IMR-90 (cell line): ENCODE measurements at regions of chr7 and their contacts with region 1.

Region 1: DNA sequence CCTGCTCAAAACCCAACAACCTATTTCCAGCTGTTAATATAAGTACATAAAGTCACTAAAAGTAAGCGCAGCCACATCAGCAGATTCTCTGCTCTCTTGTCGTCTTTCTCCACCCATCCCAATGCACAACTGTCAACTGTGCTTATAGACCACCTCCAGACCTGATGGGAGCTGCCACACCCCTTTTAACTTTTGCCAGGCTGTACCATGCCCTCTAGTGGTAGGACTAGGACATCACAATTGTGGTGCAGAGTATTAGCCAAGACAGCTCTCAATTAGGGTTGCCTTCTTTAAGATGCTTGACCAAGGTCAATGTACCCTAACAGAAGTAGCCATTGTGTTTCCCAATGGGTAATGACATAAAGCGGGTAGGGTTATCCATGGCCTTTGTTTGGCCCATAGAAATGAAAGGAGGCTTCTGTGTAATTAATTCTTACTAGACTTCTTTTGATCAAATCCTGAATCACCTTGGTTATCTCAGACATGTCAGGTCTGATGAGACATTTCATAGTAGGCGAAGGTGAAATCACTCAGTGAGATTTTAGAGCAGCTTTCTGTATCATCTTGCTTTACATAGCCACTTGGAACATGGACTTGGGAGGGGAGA is 68.1 kb downstream of the SCRN1 start:
- DNase-seq: peak; percentile 57
- ATAC-seq: peak; percentile 96
- H3K4me3 ChIP-seq: no peak overlapping the region
- H3K27ac ChIP-seq: no peak overlapping the region
- H3K4me1 ChIP-seq: no peaks in the 10 kb centered on the region
- H3K27me3 ChIP-seq: no peaks in the 10 kb centered on the region
- CTCF ChIP-seq: peak; percentile 82
- POLR2A ChIP-seq: no peak
- RAD21 ChIP-seq: peak; percentile 71

Region 2: DNA sequence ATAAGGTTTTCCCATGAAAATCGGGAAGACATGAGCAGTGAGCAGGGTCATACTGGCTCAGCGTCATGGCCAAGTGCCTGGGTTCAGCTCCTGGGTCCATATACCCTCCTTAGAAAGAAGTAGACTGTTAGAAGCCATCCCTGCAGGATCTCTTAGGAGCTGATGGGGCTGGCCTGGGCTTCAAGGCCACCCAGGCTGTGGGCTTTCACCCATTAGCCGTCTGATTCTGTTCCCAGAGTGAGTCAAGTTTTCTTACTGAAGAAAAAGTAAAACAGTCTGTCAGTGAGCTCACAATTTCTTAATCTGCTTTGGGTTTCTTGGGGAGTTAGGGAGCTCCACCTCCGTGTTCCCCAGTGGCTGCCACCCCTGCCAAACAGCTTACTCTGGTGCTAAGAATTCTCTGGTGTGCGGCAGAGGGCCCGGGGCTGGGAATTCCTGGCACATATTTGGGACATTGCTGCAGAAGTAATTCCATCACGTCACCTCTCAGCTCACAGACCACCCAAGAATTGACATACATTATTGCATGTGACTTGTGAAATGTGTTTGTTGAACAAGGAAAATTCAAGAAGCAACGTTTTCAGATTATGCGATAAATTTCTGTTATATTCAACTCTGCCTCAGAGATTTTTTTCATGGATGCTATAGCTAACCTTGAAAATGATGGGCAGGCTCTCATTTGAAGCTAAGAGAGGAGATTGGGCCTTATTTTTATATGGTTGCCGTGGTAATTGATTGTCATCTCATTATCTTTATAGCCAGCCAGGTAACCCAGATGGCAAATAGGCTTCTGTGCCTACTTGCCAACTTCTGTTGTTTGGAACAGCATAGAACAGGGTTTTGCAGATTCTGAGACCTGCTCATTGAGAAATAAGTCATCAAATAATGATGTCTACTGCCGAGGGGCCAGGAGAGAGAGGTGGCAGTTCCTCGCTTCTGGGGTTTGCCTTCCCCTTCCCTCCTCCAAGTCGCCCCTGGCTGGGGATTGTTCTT is 560.6 kb before region 1 on chr7:
- CTCF ChIA-PET with region 1: no interaction called
- POLR2A ChIA-PET with region 1: no interaction called
- dilution Hi-C with region 1: no loop called
- in situ Hi-C with region 1: no loop called
- intact Hi-C with region 1: no loop called
- DNase-seq: no peak
- ATAC-seq: no peak
- H3K4me3 ChIP-seq: no peak overlapping the region
- H3K27ac ChIP-seq: no peak overlapping the region
- H3K4me1 ChIP-seq: no peaks in the 10 kb centered on the region
- H3K27me3 ChIP-seq: no peaks in the 10 kb centered on the region
- CTCF ChIP-seq: no peak
- POLR2A ChIP-seq: no peak
- RAD21 ChIP-seq: no peak

Region 3: DNA sequence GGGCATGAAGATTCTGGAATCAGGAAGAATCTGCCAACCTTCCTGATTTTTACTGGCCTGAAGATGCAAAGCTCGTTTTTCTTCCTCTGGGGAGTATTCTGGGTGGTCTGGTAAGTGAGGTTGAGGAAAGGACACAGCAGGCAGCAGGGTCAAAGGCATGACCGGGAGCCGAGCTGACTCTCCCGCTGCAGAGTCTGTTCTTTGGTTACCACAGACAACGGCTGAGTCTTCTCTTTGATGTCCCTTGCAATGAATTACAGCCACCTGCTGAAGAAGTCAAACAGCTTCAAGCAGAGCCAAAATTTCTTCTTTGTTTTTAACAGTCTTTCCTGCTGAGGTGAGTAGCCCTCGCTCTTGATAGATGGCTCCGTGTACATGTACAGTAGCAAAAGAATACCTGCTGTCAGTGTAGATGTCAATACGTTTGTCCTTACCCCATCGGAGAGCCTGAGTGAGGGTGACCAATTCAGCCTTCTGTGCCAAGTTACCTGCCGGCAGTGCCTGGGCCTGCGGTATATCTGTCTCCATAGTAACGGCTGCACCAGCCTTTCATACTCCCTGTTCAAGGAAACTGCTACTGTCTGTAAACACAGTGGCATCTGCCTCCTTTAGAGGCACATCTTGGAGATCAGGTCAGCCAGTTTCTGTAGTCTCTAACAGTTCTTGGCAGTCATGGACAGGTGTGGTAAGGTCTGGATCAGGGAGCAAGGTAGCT is 281.5 kb before region 1 on chr7:
- CTCF ChIA-PET with region 1: no interaction called
- POLR2A ChIA-PET with region 1: no interaction called
- dilution Hi-C with region 1: no loop called
- in situ Hi-C with region 1: no loop called
- intact Hi-C with region 1: loop called (anchors 5 kb)
- DNase-seq: no peak
- ATAC-seq: no peak
- H3K4me3 ChIP-seq: no peak overlapping the region
- H3K27ac ChIP-seq: no peak overlapping the region
- H3K4me1 ChIP-seq: no peaks in the 10 kb centered on the region
- H3K27me3 ChIP-seq: no peaks in the 10 kb centered on the region
- CTCF ChIP-seq: no peak
- POLR2A ChIP-seq: no peak
- RAD21 ChIP-seq: no peak

Region 4: DNA sequence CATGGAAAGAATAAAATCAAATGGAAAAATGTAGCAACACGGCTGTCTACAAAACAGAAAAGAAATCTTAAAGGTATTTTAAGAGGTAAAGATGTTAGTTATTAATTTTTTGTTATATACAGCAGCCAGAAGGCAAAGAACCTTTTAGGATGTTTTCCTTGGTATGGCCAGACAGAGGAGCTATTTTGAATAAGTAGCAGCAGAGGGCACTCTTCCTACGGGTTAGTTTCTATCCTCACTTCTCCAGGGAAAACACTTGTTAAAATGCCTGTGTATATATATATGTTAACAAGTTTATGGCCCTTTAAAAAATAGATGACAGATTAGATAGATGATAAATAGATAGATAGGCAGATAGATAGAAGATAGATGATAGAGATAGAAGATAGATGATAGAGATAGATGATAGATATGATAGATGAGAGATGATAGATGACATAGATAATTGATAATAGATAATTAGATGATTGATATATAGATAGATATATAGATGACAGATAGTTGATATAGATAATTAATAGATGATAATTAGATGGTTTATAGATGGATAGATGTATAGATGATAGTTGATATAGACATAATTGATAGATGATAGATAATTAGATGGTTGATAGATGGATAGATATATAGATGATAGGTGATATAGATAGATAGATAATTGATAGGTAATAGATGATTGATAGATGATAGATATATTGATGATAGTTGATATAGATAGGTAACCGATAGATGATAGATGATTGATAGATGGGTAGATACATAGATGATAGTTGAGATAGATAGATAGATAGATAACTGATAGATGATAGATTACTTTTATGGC is 173.0 kb before region 1 on chr7:
- CTCF ChIA-PET with region 1: interaction called, 4 read pairs
- POLR2A ChIA-PET with region 1: no interaction called
- dilution Hi-C with region 1: no loop called
- in situ Hi-C with region 1: no loop called
- intact Hi-C with region 1: loop called (anchors 2 kb)
- DNase-seq: peak; percentile 45
- ATAC-seq: peak; percentile 95
- H3K4me3 ChIP-seq: no peak overlapping the region
- H3K27ac ChIP-seq: no peak overlapping the region
- H3K4me1 ChIP-seq: no peaks in the 10 kb centered on the region
- H3K27me3 ChIP-seq: peaks cover 2% of the 10 kb centered on the region; the same call in 1 of the 2 replicates
- CTCF ChIP-seq: peak; percentile 53
- POLR2A ChIP-seq: no peak
- RAD21 ChIP-seq: peak; percentile 51

Region 5: GRCh38 chr7:29878081-29878688 is 43.3 kb before region 1 on chr7:
- CTCF ChIA-PET with region 1: interaction called, 5 read pairs
- POLR2A ChIA-PET with region 1: no interaction called
- dilution Hi-C with region 1: no loop called
- in situ Hi-C with region 1: no loop called
- intact Hi-C with region 1: loop called (anchors 1 kb)
- DNase-seq: peak; percentile 46
- ATAC-seq: peak; percentile 65; the same call in 1 of the 2 replicates
- H3K4me3 ChIP-seq: no peak overlapping the region
- H3K27ac ChIP-seq: no peak overlapping the region
- H3K4me1 ChIP-seq: no peaks in the 10 kb centered on the region
- H3K27me3 ChIP-seq: peaks cover 11% of the 10 kb centered on the region
- CTCF ChIP-seq: peak; percentile 69
- POLR2A ChIP-seq: no peak
- RAD21 ChIP-seq: peak; percentile 66

Region 6: DNA sequence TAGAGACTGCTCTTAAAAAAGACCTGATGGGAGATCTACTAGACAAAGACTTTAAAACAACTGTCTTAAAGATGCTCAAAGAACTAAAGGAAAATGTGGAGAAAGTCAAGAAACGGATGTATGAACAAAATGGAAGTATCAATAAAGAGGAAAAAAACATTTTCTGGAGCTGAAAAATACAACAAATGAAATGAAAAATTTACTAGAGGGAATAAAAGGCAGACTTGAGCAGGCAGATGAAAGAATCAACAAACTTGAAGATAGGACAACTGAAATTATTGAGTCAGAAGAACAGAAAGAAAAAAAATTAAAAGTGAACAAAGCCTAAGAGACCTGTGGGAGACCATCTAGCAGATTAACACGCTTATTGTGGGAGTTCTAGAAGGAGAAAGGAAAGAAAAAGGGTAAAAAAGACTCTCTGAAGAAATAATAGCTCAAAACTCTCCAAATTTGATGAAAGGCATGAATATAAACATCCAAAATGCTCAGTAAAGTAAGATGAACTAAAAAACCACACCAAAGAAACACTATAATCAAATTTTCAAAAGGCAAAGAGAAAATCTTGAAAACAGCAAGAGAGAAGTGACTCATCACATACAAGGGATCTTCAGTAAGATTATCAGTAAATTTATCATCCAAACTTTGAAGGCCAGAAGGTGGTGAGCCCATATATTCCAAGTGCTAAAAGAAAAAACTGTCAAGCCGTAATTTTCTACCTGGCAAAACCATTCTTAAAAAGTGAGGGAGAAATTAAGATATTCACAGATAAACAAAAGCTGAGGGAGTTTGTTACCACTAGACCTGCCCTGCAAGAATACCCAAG is 15.1 kb before region 1 on chr7:
- CTCF ChIA-PET with region 1: interaction called, 10 read pairs
- POLR2A ChIA-PET with region 1: no interaction called
- dilution Hi-C with region 1: no loop called
- in situ Hi-C with region 1: no loop called
- intact Hi-C with region 1: no loop called
- DNase-seq: no peak
- ATAC-seq: no peak
- H3K4me3 ChIP-seq: no peak overlapping the region
- H3K27ac ChIP-seq: no peak overlapping the region
- H3K4me1 ChIP-seq: no peaks in the 10 kb centered on the region
- H3K27me3 ChIP-seq: no peaks in the 10 kb centered on the region
- CTCF ChIP-seq: no peak
- POLR2A ChIP-seq: no peak
- RAD21 ChIP-seq: no peak

Region 7: GRCh38 chr7:30369879-30370278 is 448.4 kb after region 1 on chr7:
- CTCF ChIA-PET with region 1: no interaction called
- POLR2A ChIA-PET with region 1: no interaction called
- dilution Hi-C with region 1: no loop called
- in situ Hi-C with region 1: no loop called
- intact Hi-C with region 1: no loop called
- DNase-seq: peak; percentile 38
- ATAC-seq: peak; percentile 69
- H3K4me3 ChIP-seq: no peak overlapping the region
- H3K27ac ChIP-seq: no peak overlapping the region
- H3K4me1 ChIP-seq: peaks cover 1% of the 10 kb centered on the region; the same call in 1 of the 2 replicates
- H3K27me3 ChIP-seq: no peaks in the 10 kb centered on the region
- CTCF ChIP-seq: no peak
- POLR2A ChIP-seq: no peak
- RAD21 ChIP-seq: no peak

Region 8: GRCh38 chr7:30493228-30493627 is 571.7 kb after region 1 on chr7:
- CTCF ChIA-PET with region 1: no interaction called
- POLR2A ChIA-PET with region 1: no interaction called
- dilution Hi-C with region 1: no loop called
- in situ Hi-C with region 1: no loop called
- intact Hi-C with region 1: no loop called
- DNase-seq: no peak
- ATAC-seq: no peak
- H3K4me3 ChIP-seq: no peak overlapping the region
- H3K27ac ChIP-seq: no peak overlapping the region
- H3K4me1 ChIP-seq: no peaks in the 10 kb centered on the region
- H3K27me3 ChIP-seq: no peaks in the 10 kb centered on the region
- CTCF ChIP-seq: no peak
- POLR2A ChIP-seq: no peak
- RAD21 ChIP-seq: no peak